Activated CD4-positive, alpha-beta T cell treated with anti-CD3 and anti-CD28 coated beads for 36 hours (primary cell): ENCODE measurements at regions of chr16 and their contacts with region 1.

Region 1: DNA sequence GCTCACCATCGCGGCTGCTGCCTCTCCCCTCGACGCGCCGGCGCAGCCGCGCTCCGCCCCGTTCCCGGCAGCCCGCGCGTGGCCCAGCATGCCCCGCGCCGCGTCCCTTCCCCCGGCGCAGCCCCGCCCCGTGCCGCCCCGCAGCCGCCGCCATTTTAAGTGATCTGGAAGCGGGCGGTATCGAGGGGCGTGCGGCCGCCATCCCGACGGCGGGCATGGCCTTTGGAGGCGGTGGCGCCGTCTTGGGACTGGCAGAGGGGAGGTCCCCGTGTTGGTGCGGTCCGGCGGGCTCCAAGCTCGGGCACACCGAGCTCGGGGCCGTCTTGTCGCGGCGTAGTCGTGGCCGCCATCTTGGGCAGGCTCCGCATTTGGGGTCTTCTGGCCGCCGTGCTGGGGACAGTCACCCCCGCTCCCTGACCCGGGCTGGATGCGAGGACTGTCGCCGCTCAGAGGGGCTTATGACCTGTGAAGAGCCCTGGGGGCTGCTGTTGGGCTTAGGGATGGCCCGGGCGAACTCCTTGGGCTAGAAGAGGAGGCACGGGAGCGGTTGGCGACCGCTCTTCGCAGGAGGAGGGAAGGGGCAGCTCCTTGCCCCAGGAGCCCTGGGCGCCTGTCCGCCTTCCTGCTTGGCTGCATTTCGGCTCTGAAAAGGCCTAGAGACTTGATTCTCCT is at the start of gene ELOB:
- DNase-seq: peak; percentile 95
- ATAC-seq: peak; percentile 94
- H3K4me3 Mint-ChIP-seq: peak within 1 kb of the TSS; percentile 95
- H3K27ac Mint-ChIP-seq: peak within 1 kb of the TSS; percentile 96
- H3K4me1 Mint-ChIP-seq: peaks cover 26% of the 10 kb centered on the region
- H3K27me3 Mint-ChIP-seq: no peaks in the 10 kb centered on the region
- total RNA-seq, gene ELOB: 268 to 269 TPM

Region 2: GRCh38 chr16:2537453-2538379 is 239.7 kb before region 1 on chr16 and contains the start of gene PDPK1:
- CTCF ChIA-PET with region 1: no interaction called
- POLR2A ChIA-PET with region 1: no interaction called
- intact Hi-C with region 1: no loop called
- DNase-seq: peak; percentile 97
- ATAC-seq: peak; percentile 93
- H3K4me3 Mint-ChIP-seq: peak within 1 kb of the TSS; percentile 83
- H3K27ac Mint-ChIP-seq: peak within 1 kb of the TSS; percentile 90
- H3K4me1 Mint-ChIP-seq: peaks cover 38% of the 10 kb centered on the region
- H3K27me3 Mint-ChIP-seq: no peaks in the 10 kb centered on the region
- total RNA-seq, gene PDPK1: 30.4 to 34.5 TPM

Region 3: GRCh38 chr16:2673066-2673999 is 104.0 kb before region 1 on chr16:
- CTCF ChIA-PET with region 1: no interaction called
- POLR2A ChIA-PET with region 1: no interaction called
- intact Hi-C with region 1: loop called in 1 of 2 experiments (anchors 2 kb)
- DNase-seq: peak; percentile 98
- ATAC-seq: peak; percentile 97
- H3K4me3 Mint-ChIP-seq: peak overlapping the region; percentile 73
- H3K27ac Mint-ChIP-seq: peak overlapping the region; percentile 47
- H3K4me1 Mint-ChIP-seq: peaks cover 28% of the 10 kb centered on the region
- H3K27me3 Mint-ChIP-seq: no peaks in the 10 kb centered on the region

Region 4: DNA sequence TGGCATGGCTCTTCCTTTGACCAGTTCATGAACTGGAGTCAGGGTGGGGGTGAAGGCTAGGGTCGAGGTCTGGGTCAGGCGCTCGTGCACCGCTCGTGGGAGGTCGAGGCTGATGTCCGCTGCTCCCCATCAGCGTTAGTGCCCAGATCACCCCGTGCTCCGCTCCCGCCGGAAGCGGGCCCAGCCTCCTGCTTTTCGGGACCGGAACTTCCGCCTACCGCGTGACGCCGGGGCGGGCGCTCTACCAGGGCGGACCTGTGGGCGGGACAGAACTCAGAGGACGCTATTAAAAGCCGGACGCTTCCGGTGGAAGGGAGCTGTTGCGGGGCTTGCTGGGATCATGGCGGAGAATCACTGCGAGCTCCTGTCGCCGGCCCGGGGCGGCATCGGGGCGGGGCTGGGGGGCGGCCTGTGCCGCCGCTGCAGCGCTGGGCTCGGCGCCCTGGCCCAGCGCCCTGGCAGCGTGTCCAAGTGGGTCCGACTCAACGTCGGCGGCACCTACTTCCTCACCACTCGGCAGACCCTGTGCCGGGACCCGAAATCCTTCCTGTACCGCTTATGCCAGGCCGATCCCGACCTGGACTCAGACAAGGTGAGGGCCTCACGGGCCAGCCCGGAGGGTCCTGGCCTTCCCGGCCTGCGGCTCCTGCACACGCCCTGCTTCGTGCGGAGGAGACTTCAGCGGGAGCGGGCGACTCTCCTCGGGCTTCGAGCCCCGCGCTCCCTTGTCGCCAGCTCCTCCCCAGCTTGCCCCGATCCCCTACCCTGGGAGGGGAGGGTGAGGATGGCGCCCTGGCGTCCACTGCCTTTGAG is 95.0 kb before region 1 on chr16 and contains the start of gene KCTD5:
- CTCF ChIA-PET with region 1: no interaction called
- POLR2A ChIA-PET with region 1: no interaction called
- intact Hi-C with region 1: loop called in 1 of 2 experiments (anchors 2 kb)
- DNase-seq: peak; percentile 98
- ATAC-seq: peak; percentile 92
- H3K4me3 Mint-ChIP-seq: peak within 1 kb of the TSS; percentile 100
- H3K27ac Mint-ChIP-seq: peak within 1 kb of the TSS; percentile 98
- H3K4me1 Mint-ChIP-seq: peaks cover 28% of the 10 kb centered on the region
- H3K27me3 Mint-ChIP-seq: no peaks in the 10 kb centered on the region
- total RNA-seq, gene KCTD5: 24.0 to 26.2 TPM